ENCODE measurements at regions of chr22 and their contacts with region 1.

Region 1: GRCh38 chr22:21780259-21780658 is 44.7 kb upstream of the YPEL1 start:
- DNase-seq: no peak
- ATAC-seq: no peak
- H3K4me3 ChIP-seq: no peak overlapping the region
- H3K27ac ChIP-seq: no peak overlapping the region
- H3K4me1 ChIP-seq: peaks cover 0 to 4% of the 10 kb centered on the region in 2 donors
- H3K27me3 ChIP-seq: no peaks in the 10 kb centered on the region
- CTCF ChIP-seq: no peak

Region 2: GRCh38 chr22:21867528-21868266 is 87.4 kb after region 1 on chr22 and contains the start of gene MAPK1:
- intact Hi-C with region 1: loop called in 1 of 2 experiments (anchors 10 kb)
- DNase-seq: peak; percentile 87 to 98 (median 94)
- ATAC-seq: peak; percentile 99
- H3K4me3 ChIP-seq: peak within 1 kb of the TSS; percentile 78 to 96
- H3K27ac ChIP-seq: peak within 1 kb of the TSS; percentile 85 to 95
- H3K4me1 ChIP-seq: peaks cover 15 to 40% of the 10 kb centered on the region in 2 donors
- H3K27me3 ChIP-seq: no peaks in the 10 kb centered on the region
- CTCF ChIP-seq: peak; percentile 18 to 36
- polyA plus RNA-seq, gene MAPK1: 89.8 to 113 (median 100) TPM

Region 3: DNA sequence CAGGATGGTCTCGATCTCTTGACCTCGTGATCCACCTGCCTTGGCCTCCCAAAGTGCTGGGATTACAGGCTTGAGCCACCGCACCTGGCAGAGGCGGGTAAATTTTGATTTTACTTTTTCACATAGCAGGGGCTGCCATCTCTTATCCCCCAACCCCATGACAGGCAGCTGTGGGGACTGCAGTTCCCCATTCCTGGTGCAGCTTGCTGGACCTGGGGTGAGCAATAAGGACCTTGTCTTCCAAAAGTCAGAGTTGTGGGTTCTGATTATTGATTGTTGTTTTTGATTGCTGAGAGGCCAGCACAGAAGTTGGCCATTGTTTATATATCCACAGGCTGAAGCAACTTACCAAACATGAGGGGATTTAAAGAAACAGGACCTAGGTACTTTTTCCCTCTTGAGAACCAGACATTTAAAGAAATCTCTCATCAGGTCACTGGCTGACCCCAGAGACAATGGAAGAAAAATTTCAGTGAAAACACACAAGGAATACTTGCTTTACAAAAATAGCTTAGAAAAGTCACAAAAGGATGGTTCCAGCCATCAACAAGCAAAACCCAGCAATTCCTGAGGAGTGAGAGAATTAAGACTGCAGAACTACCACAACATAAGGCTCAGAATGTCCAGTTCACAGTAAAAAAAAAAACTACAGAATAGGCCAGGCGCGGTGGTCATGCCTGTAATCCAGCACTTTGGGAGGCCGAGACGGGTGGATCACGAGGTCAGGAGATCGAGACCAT is 109.2 kb after region 1 on chr22:
- intact Hi-C with region 1: no loop called
- DNase-seq: no peak
- ATAC-seq: no peak
- H3K4me3 ChIP-seq: no peak overlapping the region
- H3K27ac ChIP-seq: no peak overlapping the region
- H3K4me1 ChIP-seq: no peaks in the 10 kb centered on the region
- H3K27me3 ChIP-seq: no peaks in the 10 kb centered on the region
- CTCF ChIP-seq: no peak

Measured in left lung (tissue), 14 donors.